Lower leg skin (tissue), 4 donors: ENCODE measurements at regions of chr4 and their contacts with region 1.

Region 1: GRCh38 chr4:86934771-86935565 is at the start of gene AFF1:
- DNase-seq: peak; percentile 91 to 98
- H3K4me3 ChIP-seq: peak within 1 kb of the TSS; percentile 88
- CTCF ChIP-seq: no peak
- POLR2A ChIP-seq: no peak
- total RNA-seq, gene AFF1: 58.1 to 107 (median 71.2) TPM

Region 2: DNA sequence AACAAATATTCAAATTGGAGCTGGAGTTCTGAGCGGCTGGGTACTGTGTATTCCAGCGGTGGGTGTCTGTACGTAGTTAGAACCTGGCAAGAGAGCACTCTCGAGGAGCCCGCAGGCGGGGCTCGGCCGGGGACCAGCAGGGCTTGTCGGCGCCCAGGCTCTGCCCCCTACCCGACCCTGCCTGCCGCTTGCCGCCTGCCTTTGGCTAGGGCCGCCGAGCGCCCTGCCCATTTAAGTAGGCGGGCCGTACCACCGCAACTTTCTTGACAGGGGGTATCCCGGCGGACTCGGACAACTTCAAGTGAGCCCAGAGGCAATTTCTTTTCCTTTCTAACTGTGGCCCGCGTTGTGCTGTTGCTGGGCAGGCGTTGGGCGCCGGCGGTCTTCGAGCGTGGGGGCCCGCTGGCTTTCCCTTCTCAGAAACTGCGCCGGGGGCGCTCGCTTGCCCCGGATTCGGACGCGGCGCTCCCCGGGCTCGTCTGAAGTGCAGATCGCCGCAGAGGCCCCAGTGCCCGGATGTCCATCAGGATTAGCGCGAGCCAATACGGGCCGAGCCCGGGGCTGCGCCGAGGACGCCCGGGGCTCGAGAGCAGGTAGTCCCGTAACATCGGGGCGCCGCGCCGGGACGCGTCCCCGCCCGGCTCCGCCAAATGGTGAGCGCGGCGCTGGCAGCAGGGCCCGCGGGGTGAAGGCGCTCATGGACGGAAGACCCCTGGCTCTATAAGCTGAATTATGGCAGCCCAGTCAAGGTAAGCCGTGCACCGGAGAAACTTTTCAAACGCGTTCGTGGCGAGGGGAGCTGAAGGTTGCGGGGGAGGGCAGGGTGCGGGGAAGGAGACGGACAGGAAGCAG is 71.9 kb after region 1 on chr4:
- intact Hi-C with region 1: loop called (anchors 5 kb)
- DNase-seq: peak; percentile 88 to 98
- H3K4me3 ChIP-seq: peak overlapping the region; percentile 93
- CTCF ChIP-seq: no peak
- POLR2A ChIP-seq: peak in 1 of 2 donors; percentile 95